Heart left ventricle (tissue), 16 donors: ENCODE measurements at regions of chr9 and their contacts with region 1.

Region 1: DNA sequence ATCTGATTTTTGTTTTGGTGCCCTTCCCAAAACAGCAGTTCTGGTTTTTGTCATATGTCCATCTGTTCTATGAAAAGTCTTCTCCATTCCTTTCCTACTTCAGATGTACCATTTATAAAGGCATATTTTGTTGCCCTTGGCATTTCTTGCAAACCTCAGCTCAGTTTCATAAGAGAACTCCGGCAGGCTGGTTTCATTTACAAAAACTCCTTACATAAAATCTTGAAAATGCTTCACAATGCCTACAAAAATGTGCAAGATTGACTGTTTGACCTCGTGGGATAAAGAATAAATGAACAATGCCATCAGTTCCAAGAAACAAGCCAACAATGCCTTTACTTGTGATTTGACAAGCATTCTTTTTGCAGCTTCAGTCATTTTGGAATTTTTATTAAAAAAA is 39.1 kb upstream of the CTNNAL1 start:
- DNase-seq: no peak
- ATAC-seq: no peak
- H3K4me3 ChIP-seq: no peak overlapping the region
- H3K27ac ChIP-seq: peak overlapping the region in 1 of 12 donors; percentile 12
- H3K4me1 ChIP-seq: peaks cover 0 to 18% (median 0%) of the 10 kb centered on the region in 12 donors
- H3K27me3 ChIP-seq: no peaks in the 10 kb centered on the region
- CTCF ChIP-seq: no peak
- POLR2A ChIP-seq: no peak

Region 2: DNA sequence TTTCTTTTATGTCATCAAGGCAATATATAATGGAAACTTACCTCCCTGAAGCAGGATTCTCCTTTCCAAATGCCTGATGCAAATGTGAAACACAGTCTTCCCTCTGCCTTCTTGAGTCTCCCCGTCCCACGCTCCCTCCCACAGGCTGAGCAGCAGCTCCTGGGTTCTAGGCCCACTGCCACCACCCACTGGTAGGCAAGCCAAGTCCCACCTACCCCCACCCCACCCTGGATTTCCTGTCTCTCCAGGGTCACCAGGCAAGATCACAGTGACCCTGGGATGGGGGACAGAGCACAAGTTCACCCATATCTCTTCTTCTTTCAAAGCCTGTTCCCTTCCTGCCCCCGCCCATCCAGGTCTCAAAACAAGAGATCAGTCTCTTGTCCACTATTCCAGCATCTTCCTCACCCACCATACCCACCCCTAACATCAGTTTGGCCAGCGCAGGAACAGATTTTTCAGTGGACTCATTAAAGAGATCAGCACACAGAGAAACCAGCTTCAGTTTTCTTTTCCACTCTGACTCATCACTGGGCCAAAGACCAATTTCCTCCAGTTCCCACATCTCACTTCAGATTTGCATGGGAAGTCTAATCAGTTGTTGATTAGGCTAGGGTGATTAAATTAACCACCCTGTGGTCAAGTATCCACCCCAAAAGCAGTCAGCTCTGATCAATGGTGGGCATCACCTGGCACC is 348.1 kb before region 1 on chr9:
- intact Hi-C with region 1: no loop called
- DNase-seq: no peak
- ATAC-seq: peak in 3 of 4 donors; percentile 37 to 66 (median 46)
- H3K4me3 ChIP-seq: no peak overlapping the region
- H3K27ac ChIP-seq: no peak overlapping the region
- H3K4me1 ChIP-seq: peaks cover 0 to 7% (median 0%) of the 10 kb centered on the region in 12 donors
- H3K27me3 ChIP-seq: no peaks in the 10 kb centered on the region
- CTCF ChIP-seq: no peak
- POLR2A ChIP-seq: no peak

Region 3: GRCh38 chr9:108924466-108924865 is 128.0 kb before region 1 on chr9:
- intact Hi-C with region 1: loop called in 1 of 10 experiments (anchors 10 kb)
- DNase-seq: no peak
- ATAC-seq: no peak
- H3K4me3 ChIP-seq: no peak overlapping the region
- H3K27ac ChIP-seq: no peak overlapping the region
- H3K4me1 ChIP-seq: no peaks in the 10 kb centered on the region
- H3K27me3 ChIP-seq: no peaks in the 10 kb centered on the region
- CTCF ChIP-seq: no peak
- POLR2A ChIP-seq: no peak

Region 4: GRCh38 chr9:109086242-109086641 is 33.8 kb after region 1 on chr9:
- intact Hi-C with region 1: loop called in 1 of 10 experiments (anchors 5 kb)
- DNase-seq: no peak
- ATAC-seq: peak in 1 of 4 donors; percentile 34
- H3K4me3 ChIP-seq: no peak overlapping the region
- H3K27ac ChIP-seq: no peak overlapping the region
- H3K4me1 ChIP-seq: peaks cover 0 to 4% (median 0%) of the 10 kb centered on the region in 12 donors
- H3K27me3 ChIP-seq: no peaks in the 10 kb centered on the region
- CTCF ChIP-seq: no peak
- POLR2A ChIP-seq: no peak

Region 5: GRCh38 chr9:109119439-109120203 is 67.2 kb after region 1 on chr9 and contains the start of gene TMEM245:
- intact Hi-C with region 1: no loop called
- DNase-seq: peak; percentile 96 to 98 (median 98)
- ATAC-seq: peak; percentile 96 to 99 (median 98)
- H3K4me3 ChIP-seq: peak within 1 kb of the TSS; percentile 84 to 99 (median 94)
- H3K27ac ChIP-seq: peak within 1 kb of the TSS; percentile 82 to 98 (median 92)
- H3K4me1 ChIP-seq: peaks cover 3 to 46% (median 34%) of the 10 kb centered on the region in 12 donors
- H3K27me3 ChIP-seq: no peaks in the 10 kb centered on the region
- CTCF ChIP-seq: peak in 4 of 12 donors; percentile 4 to 26 (median 13)
- POLR2A ChIP-seq: peak; percentile 79 to 98
- total RNA-seq, gene TMEM245: 84.4 to 174 (median 103) TPM

Region 6: GRCh38 chr9:109143881-109144562 is 91.6 kb after region 1 on chr9:
- intact Hi-C with region 1: no loop called
- DNase-seq: no peak
- ATAC-seq: no peak
- H3K4me3 ChIP-seq: no peak overlapping the region
- H3K27ac ChIP-seq: no peak overlapping the region
- H3K4me1 ChIP-seq: no peaks in the 10 kb centered on the region
- H3K27me3 ChIP-seq: no peaks in the 10 kb centered on the region
- CTCF ChIP-seq: peak in 2 of 12 donors; percentile 5 to 9
- POLR2A ChIP-seq: no peak